Panc1 (cell line): ENCODE measurements at regions of chr5 and their contacts with region 1.

Region 1: DNA sequence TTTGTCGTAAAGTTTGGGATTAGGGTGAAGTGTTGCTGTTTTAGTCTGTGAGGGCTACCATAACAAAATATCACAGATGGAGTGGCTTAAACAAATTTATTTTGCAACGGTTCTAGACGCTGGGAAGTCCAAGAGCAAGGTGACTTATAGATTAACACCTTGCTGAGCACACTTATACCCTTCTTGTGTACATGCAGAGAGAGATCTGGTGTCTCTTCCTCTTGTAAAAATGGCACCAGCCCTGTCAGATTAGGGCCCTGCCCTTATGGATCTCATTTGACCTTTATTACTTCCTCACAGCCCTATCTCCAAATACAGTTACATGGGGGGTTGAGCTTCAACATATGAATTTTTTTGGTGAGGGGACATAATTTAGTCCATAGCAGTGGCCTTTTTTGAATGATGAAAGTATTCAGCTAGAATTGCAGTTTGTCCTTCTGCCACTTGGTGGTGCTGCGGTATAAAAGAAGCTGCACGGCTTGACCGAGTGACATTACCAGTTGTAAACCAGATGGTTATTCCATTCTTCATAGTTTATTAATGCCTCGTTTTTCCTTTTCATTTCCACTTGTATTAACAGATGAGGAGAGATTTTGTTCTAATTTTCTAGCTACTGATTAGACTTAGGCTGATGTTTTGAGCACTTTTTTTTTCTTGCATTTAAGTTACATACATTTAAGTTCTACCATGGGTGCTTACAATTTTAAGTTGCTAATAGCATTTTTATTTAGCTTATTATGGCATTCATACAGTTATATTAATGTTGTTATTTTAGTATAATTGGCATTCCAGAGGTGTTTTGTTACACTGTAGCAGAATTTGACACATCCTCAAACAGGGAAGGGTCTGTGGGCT is 19.4 kb downstream of the DCP2 start:
- DNase-seq: no peak
- ATAC-seq: peak; percentile 93
- H3K4me3 ChIP-seq: no peak overlapping the region
- H3K27ac ChIP-seq: no peak overlapping the region
- H3K4me1 ChIP-seq: no peaks in the 10 kb centered on the region; the same call in 1 of the 2 replicates
- H3K27me3 ChIP-seq: no peaks in the 10 kb centered on the region
- CTCF ChIP-seq: peak; percentile 90

Region 2: GRCh38 chr5:112976432-112977309 is 19.3 kb before region 1 on chr5 and contains the start of gene DCP2:
- CTCF ChIA-PET with region 1: no interaction called
- POLR2A ChIA-PET with region 1: no interaction called
- in situ Hi-C with region 1: no loop called
- intact Hi-C with region 1: no loop called
- DNase-seq: peak; percentile 95
- ATAC-seq: peak; percentile 99
- H3K4me3 ChIP-seq: peak within 1 kb of the TSS; percentile 92 to 93
- H3K27ac ChIP-seq: peak within 1 kb of the TSS; percentile 98
- H3K4me1 ChIP-seq: peaks cover 32% of the 10 kb centered on the region
- H3K27me3 ChIP-seq: no peaks in the 10 kb centered on the region
- CTCF ChIP-seq: no peak
- total RNA-seq, gene DCP2: 70.4 TPM

Region 3: DNA sequence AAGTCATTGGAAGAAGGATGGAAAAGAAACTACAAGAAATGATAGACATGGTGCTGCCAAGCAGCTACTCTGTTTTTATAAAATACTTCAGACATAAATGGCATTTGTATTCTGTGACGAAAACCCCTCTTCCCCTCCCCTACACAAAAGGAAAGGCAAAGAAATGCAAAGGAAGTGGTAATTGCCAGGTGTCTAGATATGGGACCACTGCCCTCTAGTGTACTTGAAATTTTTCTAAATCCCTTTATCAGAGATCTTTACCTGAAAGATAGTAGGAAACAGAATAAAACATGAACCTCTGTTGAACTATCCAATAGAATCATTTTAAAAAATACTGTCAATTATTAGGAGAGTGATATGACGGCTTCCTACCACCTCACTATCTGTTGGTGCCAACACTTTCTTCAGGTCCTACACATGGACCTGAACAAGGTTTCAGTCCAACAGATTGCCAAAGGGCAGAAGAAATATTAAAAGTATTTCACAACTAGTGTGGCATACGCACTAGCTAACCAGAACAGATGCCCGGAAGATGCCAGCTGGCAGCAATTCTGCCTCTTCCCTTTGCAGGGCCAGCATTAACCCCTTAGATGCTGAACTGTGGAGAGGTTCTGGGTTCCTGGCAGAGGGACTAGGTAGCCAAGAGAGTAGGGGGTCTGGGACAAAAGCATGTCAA is 334.7 kb after region 1 on chr5:
- CTCF ChIA-PET with region 1: interaction called, 6 read pairs
- POLR2A ChIA-PET with region 1: no interaction called
- in situ Hi-C with region 1: no loop called
- intact Hi-C with region 1: loop called (anchors 2 kb)
- DNase-seq: no peak
- ATAC-seq: no peak
- H3K4me3 ChIP-seq: no peak overlapping the region
- H3K27ac ChIP-seq: no peak overlapping the region
- H3K4me1 ChIP-seq: no peaks in the 10 kb centered on the region
- H3K27me3 ChIP-seq: no peaks in the 10 kb centered on the region
- CTCF ChIP-seq: peak; percentile 42; the same call in 1 of the 2 replicates